SK-N-SH (cell line): ENCODE measurements at regions of chr9 and their contacts with region 1.

Region 1: GRCh38 chr9:77030045-77030444 is 10.6 kb downstream of the FOXB2 start:
- DNase-seq: no peak
- H3K4me3 ChIP-seq: no peak overlapping the region
- H3K27ac ChIP-seq: no peak overlapping the region
- H3K4me1 ChIP-seq: no peaks in the 10 kb centered on the region
- H3K27me3 ChIP-seq: peaks cover 48% of the 10 kb centered on the region
- CTCF ChIP-seq: no peak
- EP300 ChIP-seq: no peak
- RAD21 ChIP-seq: no peak

Region 2: DNA sequence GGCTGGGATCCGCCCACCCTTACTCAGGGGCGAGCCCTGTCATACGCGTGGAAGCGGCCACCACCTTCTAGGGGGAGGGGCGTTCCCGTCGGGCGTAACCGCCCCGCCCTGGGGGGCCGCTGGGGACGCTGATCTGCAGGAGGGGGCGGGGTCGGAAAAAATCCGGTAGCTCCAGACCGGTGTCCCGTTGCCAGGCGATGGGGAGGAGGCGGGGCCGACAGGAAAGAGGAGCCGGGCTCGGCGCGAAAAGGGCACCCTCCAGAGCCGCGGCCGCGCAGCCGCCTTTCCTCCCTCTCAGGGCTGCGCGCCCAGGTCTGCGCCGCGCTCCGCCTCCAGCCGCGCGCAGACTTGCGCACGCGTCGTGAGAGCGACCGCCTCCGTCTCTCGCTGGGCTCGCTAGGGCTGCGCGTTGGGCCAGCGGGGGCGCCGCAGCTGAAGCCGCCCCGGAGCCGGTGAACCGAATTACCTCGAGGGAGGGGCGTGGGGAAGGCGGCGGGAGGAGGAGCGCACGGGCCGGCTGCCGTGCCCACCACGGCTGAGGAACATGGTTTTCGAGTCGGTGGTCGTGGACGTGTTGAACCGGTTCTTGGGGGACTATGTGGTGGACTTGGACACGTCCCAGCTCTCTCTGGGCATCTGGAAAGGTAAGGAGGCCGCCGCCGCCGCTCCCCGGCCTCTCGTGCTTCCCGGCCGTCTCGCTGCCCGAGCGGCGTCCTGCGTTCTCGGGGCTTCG is 147.3 kb after region 1 on chr9 and contains the start of gene VPS13A:
- CTCF ChIA-PET with region 1: no interaction called
- POLR2A ChIA-PET with region 1: interaction called, 10 read pairs
- DNase-seq: peak; percentile 95
- H3K4me3 ChIP-seq: peak within 1 kb of the TSS; percentile 92 to 95
- H3K27ac ChIP-seq: peak within 1 kb of the TSS; percentile 53 to 86
- H3K4me1 ChIP-seq: peaks cover 6 to 16% of the 10 kb centered on the region in 2 experiments; a peak in 3 of 4 replicates
- H3K27me3 ChIP-seq: no peaks in the 10 kb centered on the region
- CTCF ChIP-seq: peak; percentile 37
- EP300 ChIP-seq: no peak
- RAD21 ChIP-seq: no peak
- polyA plus RNA-seq, gene VPS13A: 6.0 and 9.7 TPM in 2 replicates

Region 3: DNA sequence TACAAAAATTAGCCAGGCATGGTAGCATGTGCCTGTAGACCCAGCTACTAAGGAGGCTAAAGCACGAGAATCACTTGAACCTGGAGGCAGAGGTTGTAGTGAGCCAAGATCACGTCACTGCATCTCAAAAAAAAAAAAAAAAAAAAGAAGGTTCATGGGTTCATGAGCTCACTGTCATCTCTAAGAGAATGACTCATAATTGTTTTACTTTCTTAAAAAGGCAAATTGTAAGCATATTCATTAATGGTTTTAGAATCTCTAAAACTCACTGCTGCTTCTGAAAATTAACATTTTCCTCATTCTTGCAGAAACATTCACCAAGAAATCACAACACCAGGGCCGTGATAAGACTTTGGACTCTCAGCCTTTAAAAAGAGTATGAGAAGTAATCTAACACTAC is 514.5 kb after region 1 on chr9:
- CTCF ChIA-PET with region 1: no interaction called
- POLR2A ChIA-PET with region 1: no interaction called
- DNase-seq: no peak
- H3K4me3 ChIP-seq: no peak overlapping the region
- H3K27ac ChIP-seq: no peak overlapping the region
- H3K4me1 ChIP-seq: peaks cover 11 to 12% of the 10 kb centered on the region in 2 experiments; a peak in 3 of 4 replicates
- H3K27me3 ChIP-seq: no peaks in the 10 kb centered on the region
- CTCF ChIP-seq: no peak
- EP300 ChIP-seq: no peak
- RAD21 ChIP-seq: no peak